Left cardiac atrium (tissue), 4 donors: ENCODE measurements at regions of chr1 and their contacts with region 1.

Region 1: DNA sequence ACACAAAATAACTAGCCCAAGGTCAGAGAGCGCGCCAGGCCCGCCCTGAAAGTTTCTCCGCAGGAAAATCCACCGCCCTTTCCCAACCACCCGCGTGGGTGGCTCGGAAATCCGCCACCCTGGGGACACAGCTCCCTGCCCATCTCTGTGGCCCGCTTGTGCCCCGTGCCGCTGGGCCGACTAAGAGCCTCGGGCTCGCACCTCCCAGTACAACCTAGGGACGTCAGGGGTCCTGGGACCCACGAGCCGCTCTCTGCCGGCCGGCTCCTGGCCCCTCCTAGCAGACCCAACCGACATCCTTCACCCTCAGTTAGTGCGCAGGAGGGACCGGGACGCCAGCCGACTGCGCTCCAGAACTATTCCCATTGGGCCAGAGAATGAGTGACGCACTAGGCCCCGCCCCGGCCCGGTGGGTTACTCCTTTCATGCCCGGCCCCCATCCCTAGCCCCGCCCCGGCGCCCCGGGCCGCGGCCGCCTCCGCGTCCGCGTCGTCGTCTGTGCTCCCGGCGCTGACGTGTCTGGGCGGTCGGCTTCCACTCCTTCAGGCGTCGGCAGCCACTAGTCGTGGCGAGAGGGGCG is 395 bp upstream of the UAP1 start:
- DNase-seq: peak; percentile 99
- ATAC-seq: peak; percentile 96 to 97

Region 2: DNA sequence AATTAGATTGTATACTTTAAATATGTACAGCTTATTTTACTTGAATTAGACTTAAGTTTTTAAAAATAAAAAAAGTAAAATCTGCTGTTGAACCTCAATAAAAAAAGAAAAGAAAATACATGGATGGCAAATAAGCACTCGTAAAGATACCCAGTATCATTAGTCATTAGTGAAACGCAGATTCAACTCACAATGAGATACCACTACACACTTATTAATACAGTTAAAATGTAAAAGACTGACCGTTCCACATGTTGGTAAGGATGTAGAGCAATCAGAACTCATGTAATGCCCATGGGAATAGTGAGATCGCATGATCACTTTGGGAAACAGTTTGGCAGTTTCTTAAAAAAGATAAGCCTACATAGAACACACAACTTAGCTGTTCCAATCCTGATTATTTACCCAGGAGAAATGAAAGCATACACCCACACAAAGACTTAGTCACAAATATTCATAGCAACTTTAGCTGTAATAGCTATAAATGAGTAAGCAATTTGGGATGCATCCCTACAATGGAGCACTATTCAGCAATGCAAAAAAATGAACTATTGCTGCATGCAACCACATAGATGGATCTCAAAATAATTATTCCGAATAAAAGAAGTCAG is 156.5 kb before region 1 on chr1:
- intact Hi-C with region 1: no loop called
- DNase-seq: no peak
- ATAC-seq: peak in 1 of 2 donors; percentile 83

Region 3: DNA sequence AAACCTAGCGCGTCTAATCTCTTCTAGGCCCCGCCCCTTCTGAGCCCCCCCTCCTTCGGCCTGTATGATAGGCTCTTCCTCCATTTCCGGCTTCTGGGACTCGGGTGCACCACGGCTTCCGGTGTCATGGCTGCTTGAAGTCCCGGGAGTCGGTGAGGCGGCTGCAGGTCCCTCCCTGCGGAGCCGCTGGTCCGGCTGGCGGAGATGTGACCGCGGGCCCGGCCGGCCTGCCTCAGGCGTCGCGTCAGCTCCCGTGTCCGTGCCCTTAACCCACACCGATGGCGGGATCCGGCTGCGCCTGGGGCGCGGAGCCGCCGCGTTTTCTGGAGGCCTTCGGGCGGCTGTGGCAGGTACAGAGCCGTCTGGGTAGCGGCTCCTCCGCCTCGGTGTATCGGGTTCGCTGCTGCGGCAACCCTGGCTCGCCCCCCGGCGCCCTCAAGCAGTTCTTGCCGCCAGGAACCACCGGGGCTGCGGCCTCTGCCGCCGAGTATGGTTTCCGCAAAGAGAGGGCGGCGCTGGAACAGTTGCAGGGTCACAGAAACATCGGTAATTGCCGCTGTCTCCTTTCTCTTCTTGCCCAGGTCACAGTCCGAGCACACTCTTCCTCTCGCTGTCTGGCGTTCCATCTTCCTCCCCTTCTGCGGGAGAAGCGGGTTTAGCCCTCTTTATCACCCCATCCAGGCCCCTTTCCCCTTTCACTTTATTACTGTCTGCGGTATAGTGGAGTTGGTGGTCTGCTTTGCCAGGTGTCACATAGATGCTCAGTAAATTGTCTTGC is 63.2 kb before region 1 on chr1 and contains the start of gene UHMK1:
- intact Hi-C with region 1: loop called in 1 of 2 experiments (anchors 5 kb)
- DNase-seq: peak; percentile 94
- ATAC-seq: peak; percentile 100
- total RNA-seq, gene UHMK1: 26.0 to 27.4 TPM

Region 4: DNA sequence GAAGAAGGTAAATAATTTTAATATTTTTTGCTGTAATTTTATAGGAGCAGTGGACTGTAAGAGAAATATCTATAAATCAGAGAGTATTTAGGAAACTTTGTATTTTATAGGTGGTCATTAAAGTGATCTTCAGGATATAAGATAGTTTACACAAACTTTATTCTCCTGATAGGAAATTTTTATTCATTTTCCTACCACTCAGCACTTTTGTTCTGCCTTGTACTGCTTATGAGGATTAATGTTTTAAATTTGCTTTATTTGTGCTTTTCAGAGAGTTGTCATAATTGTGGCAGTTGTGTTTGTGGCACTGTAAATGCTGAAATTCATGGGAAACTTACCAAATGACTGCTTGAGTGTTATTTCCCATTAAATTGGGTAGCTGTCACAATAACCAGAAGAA is 33.8 kb before region 1 on chr1:
- intact Hi-C with region 1: no loop called
- DNase-seq: no peak
- ATAC-seq: no peak

Region 5: DNA sequence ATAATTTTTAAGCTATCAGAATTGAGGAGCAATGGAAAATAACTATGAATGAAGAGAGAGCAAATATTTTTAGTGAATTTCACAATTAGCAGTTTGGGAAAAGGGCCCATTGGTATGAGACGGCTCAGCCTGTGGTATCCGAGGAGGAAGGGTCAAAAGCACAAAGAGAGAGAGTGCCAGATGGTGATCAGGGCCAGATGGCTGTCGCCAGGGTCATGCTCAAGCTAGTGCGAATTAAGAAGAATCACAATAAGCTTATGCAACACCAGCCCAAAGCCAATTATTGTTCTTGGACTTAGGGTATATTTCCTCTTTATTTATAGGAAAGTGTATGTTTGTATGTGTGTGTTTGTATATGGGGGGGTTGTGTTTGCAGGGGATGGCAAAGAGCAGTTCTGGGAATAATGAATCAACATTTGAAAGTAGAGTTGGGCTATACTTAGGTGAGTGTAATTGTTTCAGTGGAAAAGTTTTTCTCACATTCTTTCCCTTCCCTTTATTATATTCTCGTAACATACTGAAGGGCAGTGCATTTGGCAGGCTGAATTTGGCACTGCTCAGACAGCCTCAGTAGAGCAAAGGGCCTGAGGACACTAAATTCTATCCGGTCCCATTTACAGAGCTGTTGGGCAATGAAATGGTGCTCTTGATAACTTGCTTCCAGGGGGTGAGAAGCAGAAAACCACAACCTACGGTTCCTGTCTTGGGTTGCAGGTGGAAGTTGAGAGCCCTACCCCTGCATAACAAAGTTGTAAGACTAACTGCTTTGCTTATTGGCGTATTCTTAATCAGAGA is 51.7 kb after region 1 on chr1:
- intact Hi-C with region 1: no loop called
- DNase-seq: peak; percentile 42
- ATAC-seq: peak; percentile 67 to 89

Region 6: DNA sequence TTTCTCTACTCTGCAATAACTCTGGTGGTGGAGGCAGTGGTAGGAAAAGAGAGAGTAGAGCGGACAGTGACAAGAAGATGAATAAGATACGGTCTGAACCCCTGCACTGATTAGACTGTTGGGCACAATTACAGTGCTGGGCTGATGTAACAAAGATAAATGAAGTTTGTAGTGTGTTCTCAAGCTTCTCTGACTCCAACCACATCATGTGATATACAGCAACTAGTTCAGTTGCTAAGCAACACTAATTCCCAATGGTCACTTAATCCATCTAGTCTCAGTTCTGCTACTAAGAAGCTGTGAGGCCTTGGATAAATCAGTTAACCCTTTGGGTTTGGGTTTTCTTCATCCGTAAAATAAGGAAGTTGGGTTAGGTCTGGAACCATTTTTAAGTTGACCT is 88.5 kb after region 1 on chr1:
- intact Hi-C with region 1: no loop called
- DNase-seq: no peak
- ATAC-seq: no peak